ENCODE measurements at regions of chr15 and their contacts with region 1.

Region 1: GRCh38 chr15:99409097-99409473 is 156.7 kb upstream of the MEF2A start:
- DNase-seq: peak; percentile 64 to 85
- ATAC-seq: peak; percentile 82 to 97 (median 94)
- H3K4me3 ChIP-seq: no peak overlapping the region
- H3K27ac ChIP-seq: peak overlapping the region; percentile 27
- H3K4me1 ChIP-seq: peaks cover 16% of the 10 kb centered on the region
- H3K27me3 ChIP-seq: no peaks in the 10 kb centered on the region
- CTCF ChIP-seq: peak; percentile 59

Region 2: DNA sequence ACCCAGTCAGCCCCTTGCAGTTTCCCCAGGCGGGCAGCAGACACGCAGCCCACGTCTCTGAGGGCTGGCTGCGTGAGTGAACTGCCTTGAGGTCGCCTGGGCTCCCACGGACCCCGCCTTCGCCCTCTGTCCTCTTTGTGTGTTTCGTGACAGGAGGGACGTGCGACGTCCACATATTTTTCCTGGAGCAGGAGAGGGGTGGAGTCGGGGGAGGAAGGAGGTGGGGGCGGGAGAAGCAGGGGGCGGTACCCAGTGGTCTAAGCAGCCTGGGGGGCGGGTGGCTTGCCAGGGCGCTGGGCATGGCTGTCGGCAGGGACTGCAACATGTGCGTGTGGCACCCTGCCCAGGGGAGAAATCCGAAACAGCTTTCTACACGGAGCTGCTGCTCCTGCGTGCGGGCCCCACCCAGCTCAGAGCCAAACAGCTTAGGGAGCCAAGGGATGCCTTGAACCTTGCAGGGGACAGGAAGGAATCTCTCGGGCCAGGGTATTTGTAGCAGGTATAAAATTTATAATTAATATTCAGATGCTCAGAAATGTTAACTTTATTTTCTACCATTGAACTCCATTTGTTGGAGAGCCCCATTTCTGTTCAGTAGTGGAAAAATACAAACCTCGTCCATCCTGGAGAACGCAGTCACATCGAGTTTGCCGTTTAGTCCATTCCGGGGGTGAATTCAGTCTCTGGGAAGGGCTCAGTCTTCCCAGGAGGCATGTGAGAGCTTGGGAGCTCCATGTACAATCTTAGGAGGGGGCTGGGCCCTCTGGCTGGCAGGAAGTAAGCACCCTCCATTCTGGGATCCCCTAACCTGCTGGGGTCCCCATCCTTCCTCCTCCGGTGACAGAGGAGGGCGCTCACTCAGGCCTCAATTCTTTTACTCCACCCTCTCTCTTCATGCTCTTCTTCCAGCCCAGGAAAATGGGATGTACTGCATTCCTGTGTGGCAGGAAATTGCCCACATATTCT is 77.6 kb after region 1 on chr15:
- intact Hi-C with region 1: loop called in 1 of 2 experiments (anchors 5 kb)
- DNase-seq: peak; percentile 88 to 92
- ATAC-seq: peak; percentile 92 to 97 (median 95)
- H3K4me3 ChIP-seq: peak overlapping the region; percentile 50
- H3K27ac ChIP-seq: peak overlapping the region; percentile 81
- H3K4me1 ChIP-seq: peaks cover 11% of the 10 kb centered on the region
- H3K27me3 ChIP-seq: no peaks in the 10 kb centered on the region
- CTCF ChIP-seq: no peak

Measured in psoas muscle (tissue), 8 donors.